WTC11 (cell line): ENCODE measurements at regions of chr17 and their contacts with region 1.

Region 1: DNA sequence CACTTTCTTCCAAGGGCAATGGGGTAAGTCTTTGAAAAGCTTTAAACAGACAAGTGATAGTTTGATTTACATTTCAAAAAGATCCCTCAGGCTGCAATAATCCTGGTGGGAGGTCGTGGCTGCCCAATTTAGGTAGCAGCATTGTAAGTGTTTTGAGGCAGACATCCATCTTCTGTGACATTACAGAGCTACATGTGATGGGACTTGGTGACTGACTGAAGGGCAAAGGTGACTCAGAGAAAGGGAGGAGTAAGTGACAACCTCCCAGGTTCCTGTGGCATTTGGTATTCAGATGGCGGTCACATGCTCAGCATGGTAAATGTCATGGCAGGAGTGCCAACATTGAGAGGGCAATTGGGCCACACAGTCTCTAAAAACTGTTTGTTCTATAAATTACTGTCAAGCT is 26.5 kb downstream of the STAT3 start:
- DNase-seq: no peak
- ATAC-seq: peak; percentile 33; the same call in 1 of the 2 replicates
- H3K4me3 Mint-ChIP-seq: 0 out of 2 replicates have a peak overlapping the region, but pooled peaks have one; percentile 2
- H3K27ac Mint-ChIP-seq: no peak overlapping the region
- H3K4me1 Mint-ChIP-seq: peaks cover 47% of the 10 kb centered on the region
- H3K27me3 Mint-ChIP-seq: no peaks in the 10 kb centered on the region
- CTCF ChIP-seq: no peak

Region 2: DNA sequence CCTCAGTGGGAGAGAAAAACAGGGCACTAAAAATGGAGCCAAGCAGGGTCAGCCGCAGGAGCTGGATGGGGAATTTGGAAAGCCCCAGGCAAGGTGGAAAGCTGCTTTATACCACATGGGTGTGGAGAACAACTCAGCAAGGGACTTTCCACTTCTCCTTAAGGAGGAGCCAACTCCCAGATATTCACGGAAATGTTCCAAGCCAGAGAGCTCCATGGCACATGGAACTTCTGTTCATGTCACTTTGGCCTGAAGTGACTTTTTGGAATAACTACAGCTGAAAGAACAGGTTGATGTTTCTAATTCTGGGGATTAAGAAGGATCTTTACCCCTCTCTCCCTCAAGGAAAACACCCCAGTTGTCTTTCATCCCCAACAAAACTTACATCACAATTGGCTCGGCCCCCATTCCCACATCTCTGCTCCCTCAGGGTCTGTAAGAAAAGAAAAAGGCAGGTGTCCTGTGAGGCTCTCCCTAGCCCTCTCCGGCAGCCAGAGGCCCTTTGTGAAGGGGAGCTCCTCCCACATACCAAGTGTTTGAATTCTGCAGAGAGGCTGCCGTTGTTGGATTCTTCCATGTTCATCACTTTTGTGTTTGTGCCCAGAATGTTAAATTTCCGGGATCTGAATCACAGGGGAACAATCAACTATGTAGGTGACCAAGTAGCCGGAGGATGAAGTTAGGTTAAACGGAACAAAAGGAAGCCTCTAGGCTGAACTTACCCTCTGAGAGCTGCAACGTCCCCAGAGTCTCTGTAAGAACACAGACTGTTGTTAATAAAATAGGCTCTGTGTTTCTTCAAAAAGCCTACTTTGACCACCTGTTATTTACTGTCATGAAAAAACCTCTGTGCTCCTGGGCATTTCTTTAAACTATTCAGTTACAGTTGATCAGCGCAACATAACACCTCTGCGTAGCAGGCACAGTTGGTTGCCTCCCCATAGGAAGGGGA is 32.5 kb before region 1 on chr17:
- CTCF ChIA-PET with region 1: interaction called, 10 read pairs
- POLR2A ChIA-PET with region 1: no interaction called
- DNase-seq: peak; percentile 76
- ATAC-seq: peak; percentile 99
- H3K4me3 Mint-ChIP-seq: peak overlapping the region; percentile 38
- H3K27ac Mint-ChIP-seq: peak overlapping the region; percentile 97
- H3K4me1 Mint-ChIP-seq: peaks cover 30% of the 10 kb centered on the region
- H3K27me3 Mint-ChIP-seq: no peaks in the 10 kb centered on the region; the same call in 1 of the 2 replicates
- CTCF ChIP-seq: no peak